Activated CD8-positive, alpha-beta T cell treated with anti-CD3 and anti-CD28 coated beads for 36 hours (primary cell): ENCODE measurements at regions of chr12 and their contacts with region 1.

Region 1: GRCh38 chr12:121494093-121494787 is 86.6 kb downstream of the KDM2B start:
- DNase-seq: peak; percentile 72
- ATAC-seq: peak; percentile 62
- H3K4me3 Mint-ChIP-seq: no peak overlapping the region
- H3K27ac Mint-ChIP-seq: no peak overlapping the region
- H3K4me1 Mint-ChIP-seq: peaks cover 18% of the 10 kb centered on the region
- H3K27me3 Mint-ChIP-seq: no peaks in the 10 kb centered on the region
- CTCF ChIP-seq: peak; percentile 90

Region 2: DNA sequence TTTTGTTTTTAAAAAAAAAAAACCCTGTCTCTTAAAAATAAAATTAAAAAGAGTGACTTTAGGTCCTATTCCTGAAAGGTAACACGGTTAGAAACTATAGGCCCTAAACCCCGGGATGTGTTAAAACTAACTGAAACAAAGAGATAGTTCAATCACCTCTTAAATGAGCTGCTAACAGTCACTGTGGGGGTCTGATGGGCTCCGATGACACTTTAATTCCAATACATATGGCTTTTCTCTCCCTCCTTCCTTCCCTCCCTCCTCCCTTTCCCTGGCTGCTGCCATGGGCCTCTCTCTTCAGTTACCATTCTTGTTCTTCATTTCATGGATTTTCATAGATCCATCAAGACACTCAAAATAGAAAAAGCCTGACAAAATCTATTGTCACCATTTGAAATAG is 17.8 kb before region 1 on chr12:
- CTCF ChIA-PET with region 1: interaction called, 39 read pairs
- POLR2A ChIA-PET with region 1: no interaction called
- intact Hi-C with region 1: no loop called
- DNase-seq: no peak
- ATAC-seq: no peak
- H3K4me3 Mint-ChIP-seq: no peak overlapping the region
- H3K27ac Mint-ChIP-seq: no peak overlapping the region
- H3K4me1 Mint-ChIP-seq: peaks cover 2% of the 10 kb centered on the region
- H3K27me3 Mint-ChIP-seq: no peaks in the 10 kb centered on the region
- CTCF ChIP-seq: no peak

Region 3: GRCh38 chr12:121678716-121679580 is 184.7 kb after region 1 on chr12:
- CTCF ChIA-PET with region 1: interaction called, 15 read pairs
- POLR2A ChIA-PET with region 1: no interaction called
- intact Hi-C with region 1: loop called (anchors 10 kb)
- DNase-seq: peak; percentile 30
- ATAC-seq: peak; percentile 34
- H3K4me3 Mint-ChIP-seq: no peak overlapping the region
- H3K27ac Mint-ChIP-seq: peak overlapping the region; percentile 56
- H3K4me1 Mint-ChIP-seq: peaks cover 9% of the 10 kb centered on the region
- H3K27me3 Mint-ChIP-seq: no peaks in the 10 kb centered on the region
- CTCF ChIP-seq: no peak